ENCODE measurements at regions of chr14 and their contacts with region 1.

Region 1: DNA sequence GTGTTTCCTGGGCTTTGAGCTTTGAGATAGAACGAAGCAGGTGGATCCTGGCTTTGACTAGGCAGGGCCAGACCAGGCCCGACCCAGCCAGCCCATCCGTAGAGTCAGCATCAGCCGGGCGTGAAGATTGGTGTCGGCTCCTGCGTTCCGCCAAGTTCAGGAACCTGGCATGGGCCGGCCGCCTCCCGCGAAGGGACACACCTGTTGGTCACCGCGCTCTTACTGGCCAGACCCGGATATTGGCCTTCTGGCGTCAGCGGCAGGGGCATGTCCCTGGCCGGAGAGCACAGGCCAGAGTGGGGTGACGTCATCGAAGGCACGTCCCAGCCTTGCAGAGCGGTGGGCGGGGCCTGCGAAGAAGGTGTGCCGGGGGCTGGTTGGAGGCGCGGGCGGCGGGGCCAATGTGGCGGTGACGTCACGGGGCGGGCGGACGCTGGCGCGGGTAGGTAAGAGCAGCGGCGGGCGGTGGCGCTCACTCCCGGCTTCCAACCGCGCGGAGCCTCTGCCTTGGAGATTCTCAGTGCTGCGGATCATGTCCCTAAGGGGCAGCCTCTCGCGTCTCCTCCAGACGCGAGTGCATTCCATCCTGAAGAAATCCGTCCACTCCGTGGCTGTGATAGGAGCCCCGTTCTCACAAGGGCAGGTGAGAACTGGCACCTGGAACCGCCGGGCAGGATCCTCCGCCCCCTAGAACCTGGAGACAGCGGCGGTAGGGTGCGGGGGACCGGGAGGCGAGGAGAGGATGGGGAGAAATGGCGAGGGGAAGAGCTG is at the start of gene ARG2:
- DNase-seq: peak; percentile 99
- ATAC-seq: peak; percentile 88
- H3K4me3 Mint-ChIP-seq: peak within 1 kb of the TSS; percentile 77
- H3K27ac Mint-ChIP-seq: peak within 1 kb of the TSS; percentile 73
- H3K4me1 Mint-ChIP-seq: peaks cover 31% of the 10 kb centered on the region
- H3K27me3 Mint-ChIP-seq: peaks cover 8% of the 10 kb centered on the region
- total RNA-seq, gene ARG2: 11.9 TPM

Region 2: DNA sequence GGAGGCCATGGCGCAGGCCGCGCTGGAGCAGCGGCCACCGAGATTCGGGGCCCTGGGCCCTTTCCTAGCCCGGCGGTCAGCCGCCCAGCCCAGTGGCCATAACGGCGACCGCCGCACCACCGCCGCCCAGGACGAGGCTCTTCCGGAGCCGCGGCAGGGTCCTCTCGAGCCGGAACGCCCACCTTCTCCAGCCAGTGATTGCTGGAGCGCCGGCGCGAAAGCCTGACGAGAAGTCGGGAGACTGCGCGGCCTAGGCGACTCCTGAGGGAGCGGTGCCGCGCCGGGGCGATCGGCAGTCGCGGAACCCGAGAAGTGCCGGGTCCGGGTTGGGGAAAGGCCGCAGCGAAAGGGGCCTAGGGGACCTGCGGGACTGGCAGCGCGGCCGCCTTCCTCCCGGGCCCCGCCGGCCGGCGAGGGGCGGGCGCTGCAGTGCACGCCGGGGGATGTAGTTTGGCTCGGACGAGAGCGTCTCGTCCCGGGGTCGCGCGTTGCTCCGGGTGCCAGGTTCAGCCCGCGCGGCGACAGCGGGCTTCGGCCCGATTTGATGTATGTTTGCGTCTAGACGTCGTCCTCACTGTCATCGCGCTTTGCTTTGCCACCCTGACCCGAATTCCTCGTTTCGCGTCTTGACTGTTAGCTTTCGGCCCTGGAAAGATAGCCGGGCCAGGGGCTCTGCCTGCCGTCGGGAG is 55.0 kb after region 1 on chr14 and contains the start of gene VTI1B:
- CTCF ChIA-PET with region 1: interaction called, 65 read pairs
- POLR2A ChIA-PET with region 1: interaction called, 7 read pairs
- intact Hi-C with region 1: loop called in 1 of 2 experiments (anchors 2 kb)
- DNase-seq: peak; percentile 83
- ATAC-seq: peak; percentile 94
- H3K4me3 Mint-ChIP-seq: peak within 1 kb of the TSS; percentile 81
- H3K27ac Mint-ChIP-seq: peak within 1 kb of the TSS; percentile 82
- H3K4me1 Mint-ChIP-seq: peaks cover 32% of the 10 kb centered on the region
- H3K27me3 Mint-ChIP-seq: no peaks in the 10 kb centered on the region
- total RNA-seq, gene VTI1B: 42.0 to 58.3 TPM

Measured in activated CD4-positive, alpha-beta T cell treated with anti-CD3 and anti-CD28 coated beads for 36 hours (primary cell).